ENCODE measurements at regions of chr2 and their contacts with region 1.

Region 1: DNA sequence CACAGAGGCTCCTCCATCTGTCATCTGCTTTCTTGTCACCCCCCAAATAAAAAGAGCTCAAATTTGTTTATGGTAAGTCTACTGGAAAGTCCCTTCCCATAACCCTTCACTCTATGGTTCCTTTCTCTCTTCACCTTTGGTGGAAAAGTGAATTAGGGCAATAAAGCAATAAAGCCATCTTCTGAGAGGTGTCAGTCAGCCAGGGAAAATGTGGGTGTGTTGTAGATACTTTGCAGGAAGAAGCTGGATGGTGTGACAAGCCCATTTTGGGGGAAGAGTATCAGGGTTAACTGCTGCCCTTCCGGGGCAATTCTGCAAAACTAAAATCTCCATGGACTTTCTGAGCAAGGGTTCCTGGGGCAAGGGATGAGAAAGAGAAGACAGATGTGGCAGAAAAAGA is 197.9 kb downstream of the SH3BP4 start:
- DNase-seq: no peak
- ATAC-seq: no peak
- H3K4me3 ChIP-seq: no peak overlapping the region
- H3K27ac ChIP-seq: no peak overlapping the region
- H3K4me1 ChIP-seq: no peaks in the 10 kb centered on the region
- H3K27me3 ChIP-seq: peaks cover 0 to 14% (median 0%) of the 10 kb centered on the region in 9 donors
- CTCF ChIP-seq: no peak
- POLR2A ChIP-seq: no peak

Region 2: DNA sequence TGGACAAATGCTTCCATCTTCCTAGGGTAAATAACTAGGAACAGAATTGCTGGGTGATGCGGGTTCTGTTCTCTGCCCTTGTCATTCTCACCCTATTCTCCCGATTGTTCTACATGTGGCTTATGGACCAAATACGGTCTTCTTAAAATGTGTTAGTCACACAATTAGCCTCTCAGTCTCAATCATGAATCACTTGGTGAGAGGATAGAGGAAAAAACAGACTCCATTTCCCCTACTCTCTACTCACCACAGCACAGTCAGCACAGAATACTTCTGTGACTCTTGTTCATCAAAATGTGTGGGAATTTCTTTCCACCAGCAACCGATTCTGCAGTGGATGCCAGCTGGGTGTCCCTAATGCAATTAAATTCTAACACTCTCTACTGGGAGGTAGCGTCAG is 72.7 kb before region 1 on chr2:
- intact Hi-C with region 1: no loop called
- DNase-seq: no peak
- ATAC-seq: no peak
- H3K4me3 ChIP-seq: no peak overlapping the region
- H3K27ac ChIP-seq: no peak overlapping the region
- H3K4me1 ChIP-seq: peaks cover 0 to 9% (median 5%) of the 10 kb centered on the region in 12 donors
- H3K27me3 ChIP-seq: no peaks in the 10 kb centered on the region
- CTCF ChIP-seq: no peak
- POLR2A ChIP-seq: no peak

Region 3: GRCh38 chr2:235087812-235088495 is 61.8 kb before region 1 on chr2:
- intact Hi-C with region 1: no loop called
- DNase-seq: peak; percentile 61 to 81 (median 73)
- ATAC-seq: peak; percentile 61 to 77 (median 72)
- H3K4me3 ChIP-seq: peak overlapping the region in 9 of 12 donors; percentile 6 to 36 (median 29)
- H3K27ac ChIP-seq: peak overlapping the region in 11 of 12 donors; percentile 6 to 76 (median 47)
- H3K4me1 ChIP-seq: peaks cover 0 to 25% (median 3%) of the 10 kb centered on the region in 12 donors
- H3K27me3 ChIP-seq: no peaks in the 10 kb centered on the region
- CTCF ChIP-seq: peak in 4 of 12 donors; percentile 6 to 31 (median 20)
- POLR2A ChIP-seq: no peak

Region 4: GRCh38 chr2:235472443-235472842 is 322.7 kb after region 1 on chr2:
- intact Hi-C with region 1: loop called in 1 of 10 experiments (anchors 10 kb)
- DNase-seq: no peak
- ATAC-seq: no peak
- H3K4me3 ChIP-seq: no peak overlapping the region
- H3K27ac ChIP-seq: no peak overlapping the region
- H3K4me1 ChIP-seq: peaks cover 0 to 12% (median 5%) of the 10 kb centered on the region in 12 donors
- H3K27me3 ChIP-seq: no peaks in the 10 kb centered on the region
- CTCF ChIP-seq: no peak
- POLR2A ChIP-seq: no peak

Measured in heart left ventricle (tissue), 16 donors.